Mammary epithelial cell (primary cell): ENCODE measurements at regions of chr11 and their contacts with region 1.

Region 1: DNA sequence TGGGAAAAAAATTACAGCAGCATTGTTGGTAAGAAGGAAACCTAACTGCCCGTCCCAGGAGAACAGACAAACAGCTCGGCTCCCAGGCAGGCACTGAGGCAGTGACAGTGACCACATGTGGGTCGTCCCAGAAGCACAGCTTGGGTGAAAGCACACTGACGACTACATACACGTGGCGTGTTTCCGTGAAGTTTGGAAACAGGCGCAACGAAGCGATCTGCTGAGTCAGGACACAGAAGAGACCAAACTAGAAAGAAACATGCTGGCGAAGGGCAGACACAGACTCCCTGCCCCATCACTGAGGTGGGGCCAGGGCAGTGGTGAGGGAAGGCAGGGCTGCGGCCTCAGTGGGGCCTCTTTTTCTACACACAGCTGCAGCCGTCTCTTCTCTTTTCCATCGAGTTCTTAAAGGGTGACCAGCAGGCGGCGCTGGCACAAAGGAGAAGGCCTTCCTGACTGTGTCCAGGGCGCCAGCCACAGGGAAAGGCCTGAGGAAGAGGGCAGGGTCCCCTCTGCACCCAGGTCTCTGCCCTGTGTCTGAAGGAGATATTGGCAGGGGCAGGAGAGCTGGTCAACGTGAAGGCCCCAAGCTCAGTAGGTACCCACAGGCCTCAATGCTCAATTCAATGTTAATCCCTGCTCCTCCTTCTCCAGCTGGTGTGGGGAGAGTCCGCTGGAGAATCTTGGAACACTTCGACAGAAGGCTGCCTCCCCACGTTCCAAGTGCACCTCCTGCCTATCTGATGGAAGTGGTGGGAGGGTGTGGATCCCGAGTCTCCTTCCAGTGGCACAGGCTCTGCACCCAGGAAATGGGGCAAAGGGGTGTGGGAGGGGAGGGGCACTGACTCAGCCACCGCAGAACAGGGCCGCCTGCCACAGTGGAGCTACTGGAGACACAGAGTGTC is 19.9 kb downstream of the CARS1 start:
- DNase-seq: peak; percentile 50
- H3K4me3 ChIP-seq: no peak overlapping the region
- H3K27ac ChIP-seq: no peak overlapping the region
- H3K4me1 ChIP-seq: peaks cover 6% of the 10 kb centered on the region
- H3K27me3 ChIP-seq: no peaks in the 10 kb centered on the region
- CTCF ChIP-seq: peak; percentile 67 to 79

Region 2: GRCh38 chr11:2951231-2952110 is 85.8 kb before region 1 on chr11:
- CTCF ChIA-PET with region 1: no interaction called
- dilution Hi-C with region 1: loop called (anchors 5 kb)
- in situ Hi-C with region 1: no loop called
- intact Hi-C with region 1: no loop called
- DNase-seq: peak; percentile 51
- H3K4me3 ChIP-seq: no peak overlapping the region
- H3K27ac ChIP-seq: no peak overlapping the region
- H3K4me1 ChIP-seq: peaks cover 22% of the 10 kb centered on the region
- H3K27me3 ChIP-seq: no peaks in the 10 kb centered on the region
- CTCF ChIP-seq: no peak

Region 3: GRCh38 chr11:3000082-3000961 is 37.0 kb before region 1 on chr11:
- CTCF ChIA-PET with region 1: no interaction called
- dilution Hi-C with region 1: loop called (anchors 5 kb)
- in situ Hi-C with region 1: no loop called
- intact Hi-C with region 1: no loop called
- DNase-seq: peak; percentile 96
- H3K4me3 ChIP-seq: no peak overlapping the region
- H3K27ac ChIP-seq: peak overlapping the region; percentile 63
- H3K4me1 ChIP-seq: peaks cover 63% of the 10 kb centered on the region
- H3K27me3 ChIP-seq: no peaks in the 10 kb centered on the region
- CTCF ChIP-seq: no peak

Region 4: GRCh38 chr11:3123761-3124733 is 86.8 kb after region 1 on chr11:
- CTCF ChIA-PET with region 1: no interaction called
- dilution Hi-C with region 1: loop called (anchors 5 kb)
- in situ Hi-C with region 1: no loop called
- intact Hi-C with region 1: no loop called
- DNase-seq: peak; percentile 94
- H3K4me3 ChIP-seq: no peak overlapping the region
- H3K27ac ChIP-seq: peak overlapping the region; percentile 29
- H3K4me1 ChIP-seq: peaks cover 42% of the 10 kb centered on the region
- H3K27me3 ChIP-seq: no peaks in the 10 kb centered on the region
- CTCF ChIP-seq: peak in 1 of 2 donors; percentile 29

Region 5: DNA sequence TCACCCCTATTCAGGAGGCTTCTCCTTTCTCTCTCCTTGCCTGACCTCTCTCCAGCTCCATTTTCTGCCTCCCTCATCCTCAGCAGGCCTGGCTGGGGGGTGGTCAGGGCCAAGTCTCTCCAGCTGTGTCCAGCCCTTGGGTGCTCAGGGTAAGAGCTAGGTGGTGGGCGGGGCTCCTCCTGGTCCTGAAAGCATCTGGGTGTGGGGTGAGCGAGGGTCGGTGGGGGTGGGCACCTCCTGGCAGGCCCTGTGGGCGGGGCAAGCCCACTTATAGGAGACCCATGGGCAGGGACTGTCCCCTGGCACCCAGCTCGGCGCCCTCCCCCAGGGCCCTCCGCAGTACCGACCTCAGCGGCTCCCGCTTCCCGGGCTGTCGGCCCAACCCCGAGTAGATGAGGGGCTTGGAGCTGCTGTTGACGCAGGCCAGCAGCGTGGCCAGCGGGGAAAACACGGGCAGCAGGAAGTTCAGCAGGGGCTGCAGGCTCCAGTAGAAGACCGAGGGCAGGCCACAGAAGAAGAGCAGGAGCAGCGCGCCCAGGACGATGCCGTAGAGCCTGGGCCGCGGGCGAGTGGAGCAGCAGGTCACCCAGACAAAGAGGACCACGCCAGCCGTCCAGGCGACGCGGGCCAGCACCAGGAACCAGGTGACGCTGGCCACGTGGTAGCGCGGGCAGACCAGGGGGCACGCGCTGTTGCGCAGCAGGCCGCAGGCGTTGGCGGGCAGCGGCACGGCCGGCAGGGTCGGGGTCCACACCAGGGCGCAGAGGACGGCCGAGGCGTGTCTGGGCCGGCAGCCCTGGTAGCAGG is 180.6 kb after region 1 on chr11:
- CTCF ChIA-PET with region 1: no interaction called
- dilution Hi-C with region 1: no loop called
- in situ Hi-C with region 1: no loop called
- intact Hi-C with region 1: loop called (anchors 1 kb)
- DNase-seq: no peak
- H3K4me3 ChIP-seq: no peak overlapping the region
- H3K27ac ChIP-seq: no peak overlapping the region
- H3K4me1 ChIP-seq: no peaks in the 10 kb centered on the region
- H3K27me3 ChIP-seq: peaks cover 3% of the 10 kb centered on the region
- CTCF ChIP-seq: no peak